ENCODE measurements at regions of chr1 and their contacts with region 1.

Region 1: GRCh38 chr1:222455188-222455879 is 92.6 kb downstream of the HHIPL2 start:
- DNase-seq: peak; percentile 90
- ATAC-seq: peak; percentile 97
- H3K4me3 Mint-ChIP-seq: no peak overlapping the region
- H3K27ac Mint-ChIP-seq: peak overlapping the region; percentile 22
- H3K4me1 Mint-ChIP-seq: peaks cover 13% of the 10 kb centered on the region
- H3K27me3 Mint-ChIP-seq: no peaks in the 10 kb centered on the region
- CTCF ChIP-seq: peak; percentile 92

Region 2: GRCh38 chr1:221478050-221478949 is 977.0 kb before region 1 on chr1:
- CTCF ChIA-PET with region 1: interaction called, 18 read pairs
- POLR2A ChIA-PET with region 1: no interaction called
- intact Hi-C with region 1: no loop called
- DNase-seq: peak; percentile 67
- ATAC-seq: peak; percentile 100
- H3K4me3 Mint-ChIP-seq: no peak overlapping the region
- H3K27ac Mint-ChIP-seq: no peak overlapping the region
- H3K4me1 Mint-ChIP-seq: no peaks in the 10 kb centered on the region
- H3K27me3 Mint-ChIP-seq: peaks cover 7% of the 10 kb centered on the region
- CTCF ChIP-seq: peak; percentile 59

Region 3: GRCh38 chr1:222095606-222096475 is 359.5 kb before region 1 on chr1:
- CTCF ChIA-PET with region 1: interaction called, 46 read pairs
- POLR2A ChIA-PET with region 1: no interaction called
- intact Hi-C with region 1: loop called (anchors 5 kb)
- DNase-seq: peak; percentile 72
- ATAC-seq: peak; percentile 91
- H3K4me3 Mint-ChIP-seq: no peak overlapping the region
- H3K27ac Mint-ChIP-seq: no peak overlapping the region
- H3K4me1 Mint-ChIP-seq: no peaks in the 10 kb centered on the region
- H3K27me3 Mint-ChIP-seq: no peaks in the 10 kb centered on the region
- CTCF ChIP-seq: peak; percentile 89

Region 4: DNA sequence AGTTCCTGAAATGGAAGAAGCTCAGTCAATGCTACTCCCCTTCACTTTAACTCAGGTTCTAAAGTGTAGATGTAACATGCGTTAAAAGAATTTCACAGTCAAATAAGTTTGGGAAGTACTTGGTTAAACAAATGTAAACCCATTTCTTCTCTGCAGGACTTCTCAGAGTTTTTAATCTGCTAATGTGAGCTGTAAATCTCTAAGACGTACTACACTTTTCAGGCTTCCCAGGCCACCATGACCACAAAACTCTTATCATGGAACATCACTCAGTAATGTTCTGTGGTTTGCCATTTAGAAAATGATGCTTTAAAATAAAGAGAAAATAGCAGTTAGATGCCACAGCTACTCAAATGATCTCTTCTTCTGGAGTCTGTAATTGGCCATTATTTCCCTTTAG is 11.8 kb before region 1 on chr1:
- CTCF ChIA-PET with region 1: interaction called, 56 read pairs
- POLR2A ChIA-PET with region 1: interaction called, 3 read pairs
- intact Hi-C with region 1: no loop called
- DNase-seq: no peak
- ATAC-seq: no peak
- H3K4me3 Mint-ChIP-seq: no peak overlapping the region
- H3K27ac Mint-ChIP-seq: no peak overlapping the region
- H3K4me1 Mint-ChIP-seq: peaks cover 16% of the 10 kb centered on the region
- H3K27me3 Mint-ChIP-seq: no peaks in the 10 kb centered on the region
- CTCF ChIP-seq: no peak

Region 5: GRCh38 chr1:222465211-222466041 is 10.1 kb after region 1 on chr1:
- CTCF ChIA-PET with region 1: interaction called, 34 read pairs
- POLR2A ChIA-PET with region 1: no interaction called
- intact Hi-C with region 1: no loop called
- DNase-seq: peak; percentile 81
- ATAC-seq: peak; percentile 98
- H3K4me3 Mint-ChIP-seq: peak overlapping the region; percentile 67
- H3K27ac Mint-ChIP-seq: peak overlapping the region; percentile 88
- H3K4me1 Mint-ChIP-seq: peaks cover 8% of the 10 kb centered on the region
- H3K27me3 Mint-ChIP-seq: no peaks in the 10 kb centered on the region
- CTCF ChIP-seq: peak; percentile 99

Region 6: GRCh38 chr1:222557148-222557547 is 101.8 kb after region 1 on chr1:
- CTCF ChIA-PET with region 1: interaction called, 10 read pairs
- POLR2A ChIA-PET with region 1: no interaction called
- intact Hi-C with region 1: no loop called
- DNase-seq: no peak
- ATAC-seq: no peak
- H3K4me3 Mint-ChIP-seq: no peak overlapping the region
- H3K27ac Mint-ChIP-seq: no peak overlapping the region
- H3K4me1 Mint-ChIP-seq: no peaks in the 10 kb centered on the region
- H3K27me3 Mint-ChIP-seq: no peaks in the 10 kb centered on the region
- CTCF ChIP-seq: no peak

Region 7: DNA sequence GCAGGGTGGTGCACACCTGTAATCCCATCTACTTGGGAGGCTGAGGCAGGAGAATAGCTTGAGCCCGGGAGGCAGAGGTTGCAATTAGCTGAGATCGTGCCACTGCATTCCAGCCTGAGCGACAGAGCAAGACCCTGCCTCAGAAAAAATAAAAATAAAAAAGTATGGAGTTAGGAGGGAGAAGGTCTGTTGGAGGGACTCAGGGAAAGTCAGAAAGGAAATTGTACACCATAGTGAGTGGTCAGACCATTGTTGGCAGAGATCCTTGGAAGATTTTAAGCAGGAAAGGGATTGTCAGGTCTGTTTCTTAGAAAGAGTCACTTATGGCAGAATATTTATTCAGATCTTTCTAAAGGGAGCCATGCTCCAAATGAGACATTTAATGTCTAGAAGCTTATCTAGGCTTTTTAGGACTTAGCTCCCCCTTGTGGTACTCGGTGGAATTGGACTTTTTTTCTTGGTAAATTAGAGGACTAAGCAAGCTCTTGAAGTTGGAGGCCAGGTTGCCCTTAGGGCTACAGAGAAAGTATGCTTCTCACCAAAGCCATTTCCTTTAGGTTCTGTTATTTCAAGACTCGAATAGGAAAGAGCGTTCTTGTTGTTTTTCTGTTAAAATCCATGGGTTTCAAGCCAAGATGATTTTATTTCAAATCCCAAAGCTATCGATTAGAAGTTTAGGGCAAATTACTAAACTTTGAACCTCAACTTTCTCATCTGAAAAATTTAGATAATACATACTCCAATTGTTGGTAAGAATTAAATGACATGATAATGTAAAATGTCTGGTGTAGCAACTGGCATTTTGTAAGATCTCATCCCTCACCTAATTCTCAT is 179.1 kb after region 1 on chr1:
- CTCF ChIA-PET with region 1: interaction called, 12 read pairs
- POLR2A ChIA-PET with region 1: no interaction called
- intact Hi-C with region 1: no loop called
- DNase-seq: peak; percentile 84
- ATAC-seq: peak; percentile 94
- H3K4me3 Mint-ChIP-seq: no peak overlapping the region
- H3K27ac Mint-ChIP-seq: peak overlapping the region; percentile 60
- H3K4me1 Mint-ChIP-seq: peaks cover 9% of the 10 kb centered on the region
- H3K27me3 Mint-ChIP-seq: no peaks in the 10 kb centered on the region
- CTCF ChIP-seq: peak; percentile 84

Region 8: DNA sequence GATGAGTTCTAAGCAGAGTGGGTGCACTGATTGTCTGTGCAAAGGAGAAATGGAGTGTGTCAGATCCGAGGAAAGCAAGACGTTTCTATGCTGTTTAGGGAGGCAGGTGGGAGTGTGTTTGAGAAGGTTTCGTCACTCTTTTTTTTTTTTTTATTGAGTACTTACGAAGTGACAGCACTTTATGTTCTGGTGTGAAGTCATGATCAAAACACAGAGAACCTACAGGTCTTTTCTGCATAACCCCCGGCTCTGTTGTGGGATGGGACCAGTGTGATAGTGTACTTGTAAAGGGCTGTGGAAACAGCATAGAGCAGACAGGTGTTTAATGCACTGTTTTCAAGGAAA is 189.3 kb after region 1 on chr1:
- CTCF ChIA-PET with region 1: no interaction called
- POLR2A ChIA-PET with region 1: no interaction called
- intact Hi-C with region 1: no loop called
- DNase-seq: peak; percentile 16
- ATAC-seq: no peak
- H3K4me3 Mint-ChIP-seq: peak overlapping the region; percentile 87
- H3K27ac Mint-ChIP-seq: peak overlapping the region; percentile 96
- H3K4me1 Mint-ChIP-seq: peaks cover 20% of the 10 kb centered on the region
- H3K27me3 Mint-ChIP-seq: no peaks in the 10 kb centered on the region
- CTCF ChIP-seq: no peak

Region 9: DNA sequence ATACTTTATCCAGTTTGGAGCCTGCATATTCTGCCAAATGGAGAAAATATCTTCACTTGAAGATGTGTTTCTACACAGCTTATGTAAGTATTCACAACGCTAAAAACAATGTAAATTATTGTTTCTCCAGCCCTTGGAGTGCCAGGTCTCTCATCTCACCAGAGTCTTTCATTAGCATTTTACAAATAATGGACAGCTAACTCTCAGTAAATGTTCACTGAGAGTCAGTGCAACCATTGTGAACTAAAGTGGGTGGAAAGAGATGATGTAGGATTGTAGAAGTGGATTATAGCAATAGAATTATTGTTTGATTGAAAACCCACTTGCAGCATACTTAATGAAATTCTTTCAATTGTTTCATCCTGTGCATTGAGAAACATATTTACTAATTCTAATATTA is 273.4 kb after region 1 on chr1:
- CTCF ChIA-PET with region 1: no interaction called
- POLR2A ChIA-PET with region 1: no interaction called
- intact Hi-C with region 1: no loop called
- DNase-seq: no peak
- ATAC-seq: no peak
- H3K4me3 Mint-ChIP-seq: no peak overlapping the region
- H3K27ac Mint-ChIP-seq: no peak overlapping the region
- H3K4me1 Mint-ChIP-seq: peaks cover 12% of the 10 kb centered on the region
- H3K27me3 Mint-ChIP-seq: no peaks in the 10 kb centered on the region
- CTCF ChIP-seq: no peak

Measured in activated CD8-positive, alpha-beta T cell treated with anti-CD3 and anti-CD28 coated beads for 36 hours (primary cell).